GM12878 (cell line): ENCODE measurements at regions of chr3 and their contacts with region 1.

Region 1: DNA sequence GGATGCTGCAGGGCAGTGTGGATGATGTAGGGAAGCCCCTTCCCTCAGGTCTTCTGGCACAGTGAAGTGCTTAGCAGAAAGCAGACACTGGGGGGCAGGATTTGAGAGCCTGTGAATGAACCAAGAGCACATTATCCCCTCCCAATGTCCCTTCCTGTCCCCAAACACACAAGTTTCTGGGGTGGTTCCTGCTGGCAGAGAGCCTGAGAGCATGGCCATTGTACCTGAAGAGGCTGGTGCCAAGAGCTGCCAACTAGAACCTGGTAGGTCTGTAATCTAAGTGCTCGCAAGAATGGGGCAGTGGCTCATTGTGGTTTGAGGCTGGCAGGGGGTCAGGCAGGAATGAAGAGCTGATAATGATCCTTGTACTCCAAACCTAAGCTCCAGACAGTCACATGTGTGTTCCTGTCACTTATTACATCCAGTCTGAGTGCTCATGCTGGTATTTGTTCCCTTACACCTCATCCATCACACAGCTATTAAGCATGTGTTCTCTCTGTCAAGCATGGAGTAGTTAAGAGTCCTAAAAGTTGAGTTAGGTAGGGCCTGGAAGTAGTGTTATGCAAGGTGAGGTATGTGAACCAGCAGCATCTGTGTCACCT is 6.7 kb upstream of the CCR1 start:
- DNase-seq: no peak
- ATAC-seq: peak; percentile 85
- H3K4me3 ChIP-seq: no peak overlapping the region
- H3K27ac ChIP-seq: no peak overlapping the region
- H3K4me1 ChIP-seq: peaks cover 31% of the 10 kb centered on the region
- H3K27me3 ChIP-seq: peaks cover 0 to 5% of the 10 kb centered on the region in 2 experiments; a peak in 1 of 4 replicates
- CTCF ChIP-seq: peak; percentile 44 to 64 (median 61); a peak in 5 of 6 replicates
- EP300 ChIP-seq: no peak
- POLR2A ChIP-seq: no peak
- RAD21 ChIP-seq: peak; percentile 69

Region 2: GRCh38 chr3:46089237-46090011 is 125.4 kb before region 1 on chr3:
- CTCF ChIA-PET with region 1: interaction called, 396 read pairs
- POLR2A ChIA-PET with region 1: interaction called, 25 read pairs
- RAD21 ChIA-PET with region 1: interaction called, 268 read pairs
- SMC1A ChIA-PET with region 1: interaction called, 342 read pairs
- in situ Hi-C with region 1: no loop called
- intact Hi-C with region 1: no loop called
- DNase-seq: peak; percentile 78
- ATAC-seq: peak; percentile 90
- H3K4me3 ChIP-seq: no peak overlapping the region
- H3K27ac ChIP-seq: peak overlapping the region; percentile 20; the same call in 1 of the 2 replicates
- H3K4me1 ChIP-seq: peaks cover 58% of the 10 kb centered on the region
- H3K27me3 ChIP-seq: no peaks in the 10 kb centered on the region
- CTCF ChIP-seq: no peak
- EP300 ChIP-seq: peak; percentile 24 to 75; a peak in 2 of 4 replicates
- POLR2A ChIP-seq: no peak
- RAD21 ChIP-seq: 0 out of 2 replicates have a peak, but pooled peaks have one; percentile 5

Region 3: DNA sequence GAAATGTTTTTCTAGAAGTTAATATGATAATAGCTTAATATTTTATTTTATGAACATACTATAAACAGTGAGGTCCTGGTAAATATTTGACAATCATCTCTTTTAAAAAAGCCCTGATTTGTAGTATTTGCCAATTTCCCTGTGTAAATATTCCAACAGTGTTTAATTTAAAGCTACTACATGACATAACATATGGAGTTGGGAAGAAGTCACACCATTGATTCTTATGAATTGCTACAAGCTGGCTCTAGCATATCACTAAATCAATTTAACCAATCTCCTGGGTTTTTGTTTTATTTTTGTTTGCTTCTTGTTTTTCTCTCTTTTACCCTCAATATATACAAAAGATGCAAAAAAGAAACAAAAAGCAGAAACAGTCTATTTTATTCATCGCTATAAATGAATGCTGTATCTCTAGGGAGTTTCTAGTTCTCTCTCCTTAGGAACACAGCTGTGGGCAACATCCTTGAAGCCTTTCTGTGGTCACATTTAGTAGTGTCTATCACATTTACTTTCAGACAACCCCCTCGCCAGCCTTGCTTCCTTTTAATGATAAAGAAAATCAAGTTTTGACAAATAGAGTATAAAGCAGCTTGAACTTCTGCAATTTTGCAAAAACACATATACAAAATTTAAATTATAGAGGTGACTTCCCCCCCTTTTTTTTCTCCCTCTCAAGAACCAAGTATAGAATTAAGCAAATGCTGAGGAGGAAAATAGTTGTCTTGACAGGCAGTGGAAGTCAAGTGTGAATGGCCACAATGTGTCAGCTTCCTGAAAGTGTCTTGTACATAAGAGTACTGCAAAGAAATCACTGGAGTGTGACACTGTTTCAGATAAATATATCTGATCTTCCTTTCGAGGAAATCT is 28.1 kb before region 1 on chr3:
- CTCF ChIA-PET with region 1: interaction called, 71 read pairs
- POLR2A ChIA-PET with region 1: interaction called, 5 read pairs
- RAD21 ChIA-PET with region 1: interaction called, 51 read pairs
- SMC1A ChIA-PET with region 1: interaction called, 103 read pairs
- in situ Hi-C with region 1: no loop called
- intact Hi-C with region 1: no loop called
- DNase-seq: peak; percentile 87
- ATAC-seq: peak; percentile 94
- H3K4me3 ChIP-seq: 0 out of 2 replicates have a peak overlapping the region, but pooled peaks have one; percentile 6
- H3K27ac ChIP-seq: peak overlapping the region; percentile 71
- H3K4me1 ChIP-seq: peaks cover 33% of the 10 kb centered on the region
- H3K27me3 ChIP-seq: no peaks in the 10 kb centered on the region
- CTCF ChIP-seq: no peak
- EP300 ChIP-seq: peak in 1 of 2 experiments; percentile 54; a peak in 2 of 4 replicates
- POLR2A ChIP-seq: no peak
- RAD21 ChIP-seq: no peak

Region 4: DNA sequence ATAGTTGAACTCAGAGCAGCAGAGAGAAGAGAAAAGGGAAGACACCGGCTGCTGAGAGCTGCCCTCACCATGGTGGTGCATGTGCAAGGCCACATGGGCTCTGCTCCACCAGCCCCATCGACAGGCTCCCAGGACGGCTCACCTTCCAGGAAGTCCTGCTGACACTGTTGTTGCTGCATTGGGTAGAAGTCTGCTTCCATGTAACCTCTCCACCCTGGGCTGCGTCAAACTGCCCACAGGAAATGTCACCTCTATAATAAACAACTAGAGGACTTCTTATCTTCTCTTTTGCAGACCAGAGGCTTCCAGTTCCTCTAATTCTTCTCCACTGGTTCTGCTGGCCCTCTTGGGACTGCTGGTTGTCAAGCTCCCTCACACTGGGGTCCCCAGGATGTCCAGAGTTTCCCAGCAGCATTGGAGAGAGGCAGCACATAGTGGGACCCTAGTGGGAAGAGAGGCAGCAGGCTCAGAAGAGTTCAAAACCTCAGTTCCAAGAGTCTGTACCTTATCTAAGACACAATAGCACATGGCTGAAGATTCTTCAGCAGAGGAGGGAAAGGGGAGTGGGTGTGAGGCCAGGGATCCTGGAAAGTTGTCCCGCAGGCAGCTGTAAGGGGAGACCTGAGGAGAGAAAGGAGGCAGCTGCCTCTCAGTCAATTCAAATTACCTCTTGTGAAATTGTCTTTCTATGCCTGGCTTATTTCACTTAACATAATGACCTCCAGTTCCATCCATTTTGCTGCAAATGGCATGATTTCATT is 21.6 kb after region 1 on chr3:
- CTCF ChIA-PET with region 1: interaction called, 24 read pairs
- POLR2A ChIA-PET with region 1: no interaction called
- RAD21 ChIA-PET with region 1: interaction called, 6 read pairs
- SMC1A ChIA-PET with region 1: interaction called, 5 read pairs
- in situ Hi-C with region 1: no loop called
- intact Hi-C with region 1: no loop called
- DNase-seq: no peak
- ATAC-seq: peak; percentile 29
- H3K4me3 ChIP-seq: no peak overlapping the region
- H3K27ac ChIP-seq: no peak overlapping the region
- H3K4me1 ChIP-seq: no peaks in the 10 kb centered on the region; the same call in 1 of the 2 replicates
- H3K27me3 ChIP-seq: peaks cover 0 to 9% of the 10 kb centered on the region in 2 experiments; a peak in 3 of 4 replicates
- CTCF ChIP-seq: no peak
- EP300 ChIP-seq: no peak
- POLR2A ChIP-seq: no peak
- RAD21 ChIP-seq: no peak

Region 5: GRCh38 chr3:46297658-46298463 is 83.0 kb after region 1 on chr3:
- CTCF ChIA-PET with region 1: interaction called, 9 read pairs
- POLR2A ChIA-PET with region 1: interaction called, 3 read pairs
- RAD21 ChIA-PET with region 1: interaction called, 9 read pairs
- SMC1A ChIA-PET with region 1: interaction called, 14 read pairs
- in situ Hi-C with region 1: no loop called
- intact Hi-C with region 1: no loop called
- DNase-seq: no peak
- ATAC-seq: peak; percentile 20
- H3K4me3 ChIP-seq: no peak overlapping the region
- H3K27ac ChIP-seq: peak overlapping the region; percentile 47; the same call in 1 of the 2 replicates
- H3K4me1 ChIP-seq: peaks cover 68% of the 10 kb centered on the region
- H3K27me3 ChIP-seq: no peaks in the 10 kb centered on the region
- CTCF ChIP-seq: no peak
- EP300 ChIP-seq: no peak
- POLR2A ChIP-seq: no peak
- RAD21 ChIP-seq: no peak

Region 6: GRCh38 chr3:46378426-46378942 is 163.6 kb after region 1 on chr3:
- CTCF ChIA-PET with region 1: interaction called, 555 read pairs
- POLR2A ChIA-PET with region 1: interaction called, 4 read pairs
- RAD21 ChIA-PET with region 1: interaction called, 421 read pairs
- SMC1A ChIA-PET with region 1: interaction called, 434 read pairs
- in situ Hi-C with region 1: loop called (anchors 5 kb)
- intact Hi-C with region 1: no loop called
- DNase-seq: no peak
- ATAC-seq: peak; percentile 90
- H3K4me3 ChIP-seq: no peak overlapping the region
- H3K27ac ChIP-seq: no peak overlapping the region
- H3K4me1 ChIP-seq: peaks cover 12% of the 10 kb centered on the region
- H3K27me3 ChIP-seq: peaks cover 0 to 3% of the 10 kb centered on the region in 2 experiments; a peak in 2 of 4 replicates
- CTCF ChIP-seq: peak; percentile 77 to 80 (median 79)
- EP300 ChIP-seq: no peak
- POLR2A ChIP-seq: no peak
- RAD21 ChIP-seq: peak; percentile 92